Ascending aorta (tissue), 2 donors: ENCODE measurements at regions of chr19 and their contacts with region 1.

Region 1: DNA sequence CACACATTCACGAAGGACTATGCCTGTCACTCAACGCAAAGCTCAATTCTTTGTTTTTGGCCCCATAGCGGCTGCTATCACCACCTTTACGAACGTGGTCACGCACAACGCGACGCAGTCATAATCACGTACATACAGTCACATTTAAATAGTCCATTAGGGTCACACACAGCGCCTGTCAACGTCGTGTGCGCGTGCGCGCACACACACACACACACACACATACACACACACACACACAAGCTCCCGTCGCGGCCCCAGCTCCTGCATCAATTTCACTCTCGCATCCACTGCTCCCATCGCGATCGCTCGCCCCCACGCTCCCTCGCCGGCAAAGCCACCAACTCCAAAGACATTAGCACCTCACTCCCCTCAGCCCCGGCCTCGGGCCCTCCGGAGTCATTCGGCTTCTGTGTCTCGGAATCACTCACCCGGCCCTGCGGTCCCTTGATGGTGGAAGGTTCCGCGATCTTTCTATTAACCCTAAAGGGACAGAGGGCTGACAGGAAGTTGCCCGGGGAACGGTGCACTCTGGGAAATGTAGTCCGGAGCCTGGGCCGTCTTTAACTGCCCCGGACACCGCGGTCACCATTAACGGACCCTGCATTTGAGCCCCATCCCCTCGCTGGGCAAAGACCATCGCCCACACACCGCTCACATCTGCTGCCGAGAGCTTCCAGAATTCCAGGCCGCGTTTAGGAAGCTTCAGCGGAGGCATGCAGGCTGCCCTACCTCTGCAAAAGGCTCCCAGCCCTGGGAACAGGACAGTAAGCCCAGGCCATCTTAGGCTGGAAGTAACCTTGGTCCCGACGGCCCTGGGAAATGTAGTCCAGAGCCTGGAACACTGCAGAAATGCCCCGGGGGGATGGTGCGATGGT is at the start of gene ZNF790:
- DNase-seq: peak; percentile 62 to 94
- H3K4me3 ChIP-seq: peak within 1 kb of the TSS; percentile 66 to 67
- H3K27ac ChIP-seq: peak within 1 kb of the TSS; percentile 72 to 75
- H3K4me1 ChIP-seq: peaks cover 0 to 7% of the 10 kb centered on the region in 2 donors
- H3K27me3 ChIP-seq: no peaks in the 10 kb centered on the region
- CTCF ChIP-seq: no peak
- total RNA-seq, gene ZNF790: 17.0 TPM

Region 2: DNA sequence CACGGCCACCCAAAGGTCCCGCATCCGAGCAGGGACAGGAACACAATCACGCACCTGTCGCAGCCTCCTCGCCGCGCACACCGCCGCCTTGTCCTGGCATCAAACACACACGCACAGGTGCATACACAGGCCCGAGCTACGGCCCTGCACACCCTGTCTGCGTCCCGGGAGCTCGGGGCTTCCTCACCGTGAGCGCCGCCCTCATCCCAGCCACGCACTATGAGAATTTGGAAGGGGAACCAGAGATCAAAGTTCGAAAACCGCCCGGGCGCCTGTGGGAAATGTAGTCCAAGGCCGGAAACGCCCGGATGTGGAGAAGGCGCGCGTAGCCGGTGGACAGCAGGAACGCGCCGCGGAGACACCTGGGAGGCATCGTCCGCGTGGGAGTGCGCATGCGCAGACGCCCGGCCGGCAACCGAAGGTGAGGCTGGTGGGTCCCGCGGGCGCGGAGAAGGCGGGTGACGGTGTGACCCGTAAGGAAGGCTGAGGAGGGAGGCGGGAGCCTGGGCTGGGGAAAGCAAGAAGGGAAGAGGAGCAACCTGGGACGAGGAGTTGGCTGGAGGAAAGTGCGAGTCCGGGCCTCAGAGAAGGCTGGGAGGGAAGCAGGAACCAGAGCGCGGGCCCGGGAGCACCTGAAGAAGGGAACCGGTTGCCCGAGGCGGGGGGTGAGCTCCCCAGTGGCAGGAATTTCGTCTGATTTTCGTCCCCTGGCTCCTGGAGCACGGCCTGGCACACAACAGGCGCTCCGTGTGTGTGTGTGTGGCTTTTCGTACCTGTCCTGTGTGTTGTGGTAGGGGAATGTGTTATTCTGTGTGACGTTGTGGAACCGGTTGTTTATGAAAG is 150.7 kb before region 1 on chr19 and contains the start of gene ZNF567:
- intact Hi-C with region 1: loop called (anchors 2 kb)
- DNase-seq: peak; percentile 88 to 98
- H3K4me3 ChIP-seq: peak within 1 kb of the TSS; percentile 68 to 75
- H3K27ac ChIP-seq: peak within 1 kb of the TSS; percentile 39 to 66
- H3K4me1 ChIP-seq: peaks cover 0 to 6% of the 10 kb centered on the region in 2 donors
- H3K27me3 ChIP-seq: no peaks in the 10 kb centered on the region
- CTCF ChIP-seq: no peak
- total RNA-seq, gene ZNF567: 3.7 TPM

Region 3: GRCh38 chr19:36915992-36916830 is 78.1 kb after region 1 on chr19 and contains the starts of genes ZNF568 and ZNF829:
- intact Hi-C with region 1: loop called (anchors 1 kb)
- DNase-seq: peak; percentile 42 to 93
- H3K4me3 ChIP-seq: peak within 1 kb of the TSS; percentile 80 to 91
- H3K27ac ChIP-seq: peak within 1 kb of the TSS; percentile 93 to 98
- H3K4me1 ChIP-seq: peaks cover 0 to 10% of the 10 kb centered on the region in 2 donors
- H3K27me3 ChIP-seq: no peaks in the 10 kb centered on the region
- CTCF ChIP-seq: peak; percentile 57 to 73 (median 59)
- total RNA-seq, gene ZNF568: 2.4 TPM
- total RNA-seq, gene ZNF829: 1.2 TPM

Region 4: GRCh38 chr19:37217855-37218591 is 379.9 kb after region 1 on chr19 and contains the start of gene ZNF383:
- intact Hi-C with region 1: loop called (anchors 10 kb)
- DNase-seq: peak; percentile 47 to 91
- H3K4me3 ChIP-seq: peak within 1 kb of the TSS; percentile 60 to 73
- H3K27ac ChIP-seq: peak within 1 kb of the TSS; percentile 75 to 80
- H3K4me1 ChIP-seq: peaks cover 0 to 4% of the 10 kb centered on the region in 2 donors
- H3K27me3 ChIP-seq: no peaks in the 10 kb centered on the region
- CTCF ChIP-seq: no peak
- total RNA-seq, gene ZNF383: 6.9 TPM